OCI-LY7 (cell line): ENCODE measurements at regions of chr10 and their contacts with region 1.

Region 1: DNA sequence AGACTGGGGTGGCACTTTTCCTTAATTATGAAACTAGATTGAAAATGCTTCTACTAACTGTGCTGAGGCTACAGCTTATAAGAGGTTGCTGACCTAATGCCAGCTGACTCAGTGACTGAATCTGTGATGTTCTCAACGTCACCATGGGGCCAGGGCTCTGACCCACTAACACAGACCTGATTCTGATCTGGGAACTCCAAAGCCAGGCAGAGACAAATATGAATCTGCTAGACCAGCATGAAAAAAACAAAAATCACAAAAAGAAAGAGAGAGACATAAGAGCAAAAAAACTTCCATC is 16.1 kb downstream of the USP6NL start:
- DNase-seq: no peak
- H3K4me3 ChIP-seq: no peak overlapping the region
- H3K27ac ChIP-seq: peak overlapping the region; percentile 22
- H3K4me1 ChIP-seq: peaks cover 44% of the 10 kb centered on the region
- CTCF ChIP-seq: no peak

Region 2: DNA sequence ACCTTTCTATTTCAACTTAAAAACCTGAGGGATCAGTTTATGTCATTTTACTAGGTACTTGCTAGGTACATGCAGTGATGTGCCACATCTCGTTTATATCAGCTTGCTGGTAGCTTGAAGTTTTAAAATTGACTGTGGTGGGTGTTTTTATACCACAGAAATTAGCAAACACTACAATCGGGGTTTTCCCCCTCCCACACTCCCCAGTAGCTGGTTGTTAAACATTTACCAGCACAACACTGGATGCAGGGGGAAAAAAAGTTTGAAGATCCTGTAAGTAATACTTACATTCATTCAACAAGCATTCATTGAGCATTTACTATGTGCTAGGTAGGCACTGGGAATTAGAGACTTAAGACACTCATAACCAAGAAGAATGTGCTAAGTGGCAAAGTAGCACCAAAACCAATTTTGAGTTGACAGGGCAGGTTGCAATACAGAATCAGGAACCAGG is 16.5 kb before region 1 on chr10:
- CTCF ChIA-PET with region 1: no interaction called
- POLR2A ChIA-PET with region 1: interaction called, 16 read pairs
- intact Hi-C with region 1: no loop called
- DNase-seq: no peak
- H3K4me3 ChIP-seq: no peak overlapping the region
- H3K27ac ChIP-seq: no peak overlapping the region
- H3K4me1 ChIP-seq: peaks cover 40% of the 10 kb centered on the region
- CTCF ChIP-seq: no peak

Region 3: GRCh38 chr10:11913074-11913641 is 317.8 kb after region 1 on chr10:
- CTCF ChIA-PET with region 1: no interaction called
- POLR2A ChIA-PET with region 1: no interaction called
- intact Hi-C with region 1: no loop called
- DNase-seq: no peak
- H3K4me3 ChIP-seq: no peak overlapping the region
- H3K27ac ChIP-seq: no peak overlapping the region
- H3K4me1 ChIP-seq: no peaks in the 10 kb centered on the region
- CTCF ChIP-seq: no peak